Activated CD8-positive, alpha-beta T cell treated with anti-CD3 and anti-CD28 coated beads, Interleukin-2, amount 10 ng/mL, durations not matched to agents 7 days and 5 days (primary cell): ENCODE measurements at regions of chr15 and their contacts with region 1.

Region 1: DNA sequence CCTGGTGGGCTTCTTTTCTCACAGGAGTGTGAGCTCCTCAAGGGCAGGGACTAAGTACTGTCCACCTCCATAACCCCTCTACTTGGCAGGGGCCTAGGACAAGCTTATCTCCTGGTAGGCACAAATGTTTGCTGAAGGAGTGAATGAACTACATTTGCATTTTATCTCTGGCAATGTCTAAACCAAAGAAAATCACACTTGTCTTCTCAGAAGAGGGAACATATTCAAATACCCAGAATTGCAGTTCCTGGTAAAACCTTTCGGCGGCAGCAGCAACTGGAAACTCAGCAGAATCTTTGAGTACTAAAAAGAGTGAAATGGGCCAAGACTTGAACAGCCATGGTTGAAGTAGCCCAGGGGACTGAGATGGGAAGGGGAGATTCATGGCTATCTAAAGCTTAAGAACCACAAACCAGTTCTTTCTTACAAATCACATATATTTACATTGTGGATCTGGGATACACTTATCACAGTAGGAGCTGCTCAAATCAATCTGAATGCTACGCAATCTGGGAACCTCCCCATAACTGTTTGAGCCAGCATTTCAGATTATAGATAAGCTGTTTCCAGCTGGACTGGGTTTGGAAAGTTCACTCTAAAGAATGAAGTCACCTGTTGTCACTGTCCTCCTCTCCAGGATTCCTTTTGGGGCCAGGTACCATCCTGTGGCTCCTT is 18.7 kb upstream of the PTPN9 start:
- DNase-seq: peak; percentile 80
- ATAC-seq: peak; percentile 86
- H3K4me3 Mint-ChIP-seq: peak overlapping the region; percentile 63
- H3K27ac Mint-ChIP-seq: peak overlapping the region; percentile 93
- H3K4me1 Mint-ChIP-seq: peaks cover 43% of the 10 kb centered on the region
- H3K27me3 Mint-ChIP-seq: no peaks in the 10 kb centered on the region

Region 2: GRCh38 chr15:75508840-75509532 is 88.8 kb before region 1 on chr15:
- CTCF ChIA-PET with region 1: interaction called, 22 read pairs
- POLR2A ChIA-PET with region 1: no interaction called
- DNase-seq: peak; percentile 47
- ATAC-seq: peak; percentile 42
- H3K4me3 Mint-ChIP-seq: no peak overlapping the region
- H3K27ac Mint-ChIP-seq: peak overlapping the region; percentile 8
- H3K4me1 Mint-ChIP-seq: no peaks in the 10 kb centered on the region
- H3K27me3 Mint-ChIP-seq: no peaks in the 10 kb centered on the region

Region 3: DNA sequence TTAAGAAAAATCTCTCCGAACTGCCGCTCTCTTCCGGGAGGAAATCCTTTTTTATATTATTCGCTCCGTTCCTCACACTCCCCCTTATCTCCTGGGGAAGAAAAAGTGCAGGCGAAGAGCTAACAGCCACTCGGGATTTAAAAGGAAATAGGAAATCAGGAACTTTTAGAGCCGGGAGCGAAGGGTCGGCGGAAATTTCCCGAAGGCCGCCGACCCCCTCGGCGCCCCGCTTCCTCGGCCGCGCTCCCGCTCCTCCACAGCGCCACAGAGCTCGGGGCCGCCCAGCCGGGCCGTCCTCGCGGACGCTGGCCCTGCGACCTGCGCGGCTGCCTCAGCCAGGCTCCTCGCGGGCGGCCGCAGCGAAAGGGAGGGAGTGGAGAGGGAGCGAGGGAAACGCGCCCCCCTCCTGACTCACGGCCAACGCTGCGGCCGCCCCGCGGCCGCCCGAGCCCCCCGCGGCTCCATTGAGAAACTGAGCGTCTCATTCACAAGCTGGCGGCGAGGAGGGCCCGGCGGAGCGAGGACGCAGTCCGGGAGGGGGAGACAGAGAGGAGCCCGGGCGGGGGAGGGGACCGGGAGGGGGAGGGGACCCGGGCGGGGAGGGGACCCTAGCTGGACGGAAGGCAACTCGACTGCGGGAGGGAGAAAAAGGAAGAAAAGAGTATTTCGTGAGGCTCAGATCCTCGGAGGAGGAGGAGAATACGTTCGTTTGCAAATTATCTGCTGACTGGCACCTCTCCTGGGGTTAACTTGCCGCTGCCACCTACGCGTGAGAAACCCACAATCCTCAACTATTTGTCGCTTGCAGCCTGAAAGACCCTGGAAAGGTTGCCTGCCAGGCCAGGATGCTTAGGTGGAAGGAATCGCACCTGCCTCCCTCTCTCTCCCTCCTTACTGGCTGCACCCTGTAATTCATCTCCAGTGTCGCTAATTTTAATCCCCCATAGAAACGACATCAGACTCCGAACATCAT is 18.6 kb before region 1 on chr15 and contains the start of gene PTPN9:
- CTCF ChIA-PET with region 1: interaction called, 24 read pairs
- POLR2A ChIA-PET with region 1: interaction called, 3 read pairs
- DNase-seq: peak; percentile 84
- ATAC-seq: peak; percentile 83
- H3K4me3 Mint-ChIP-seq: peak within 1 kb of the TSS; percentile 92
- H3K27ac Mint-ChIP-seq: peak within 1 kb of the TSS; percentile 94
- H3K4me1 Mint-ChIP-seq: peaks cover 18% of the 10 kb centered on the region
- H3K27me3 Mint-ChIP-seq: no peaks in the 10 kb centered on the region
- total RNA-seq, gene PTPN9: 46.3 to 48.7 TPM

Region 4: GRCh38 chr15:75625542-75626347 is 27.9 kb after region 1 on chr15 and contains the start of gene SNUPN:
- CTCF ChIA-PET with region 1: interaction called, 21 read pairs
- POLR2A ChIA-PET with region 1: interaction called, 19 read pairs
- DNase-seq: peak; percentile 97
- ATAC-seq: peak; percentile 89
- H3K4me3 Mint-ChIP-seq: peak within 1 kb of the TSS; percentile 97
- H3K27ac Mint-ChIP-seq: peak within 1 kb of the TSS; percentile 99
- H3K4me1 Mint-ChIP-seq: peaks cover 44% of the 10 kb centered on the region
- H3K27me3 Mint-ChIP-seq: no peaks in the 10 kb centered on the region
- total RNA-seq, gene SNUPN: 31.4 to 32.5 TPM

Region 5: DNA sequence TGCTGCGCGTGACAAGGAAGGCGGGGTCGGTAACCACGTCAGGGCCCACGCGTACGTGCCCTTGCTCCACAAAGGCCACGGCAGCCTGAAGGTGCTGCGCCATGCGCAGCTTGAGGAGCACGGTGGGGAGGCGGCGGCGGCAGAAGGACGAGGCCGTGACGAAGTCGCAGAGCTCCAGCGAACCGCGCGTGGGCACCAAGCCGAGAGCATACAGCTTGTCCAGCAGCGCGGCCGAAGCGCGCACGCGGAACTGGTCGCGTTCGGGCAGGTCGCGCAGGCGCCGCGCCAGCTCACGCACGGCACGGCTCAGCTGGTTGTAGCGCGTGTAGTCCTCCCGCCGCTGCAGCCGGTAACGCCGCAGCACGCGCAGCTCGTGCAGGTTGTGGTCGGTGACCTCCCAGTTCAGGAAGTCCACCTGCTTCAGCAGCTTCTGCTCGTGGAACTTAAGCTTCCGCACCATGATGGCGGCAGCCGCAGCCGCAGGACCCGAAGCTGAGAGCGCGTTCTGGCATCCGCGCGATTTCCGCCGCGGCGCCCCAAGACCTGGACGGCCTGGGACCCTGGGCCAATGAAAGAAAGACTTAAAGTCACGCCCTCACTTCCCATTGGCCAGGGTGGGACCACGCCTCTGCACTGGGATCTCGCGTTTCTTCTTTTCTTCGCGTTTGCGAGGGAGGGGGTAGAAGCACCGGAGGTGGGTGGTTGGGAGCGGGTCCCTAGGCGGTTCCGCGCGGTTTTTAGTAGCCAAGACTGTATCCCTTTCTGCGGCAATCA is 42.1 kb after region 1 on chr15 and contains the start of gene IMP3:
- CTCF ChIA-PET with region 1: interaction called, 63 read pairs
- POLR2A ChIA-PET with region 1: interaction called, 25 read pairs
- DNase-seq: peak; percentile 98
- ATAC-seq: peak; percentile 95
- H3K4me3 Mint-ChIP-seq: peak within 1 kb of the TSS; percentile 88
- H3K27ac Mint-ChIP-seq: peak within 1 kb of the TSS; percentile 95
- H3K4me1 Mint-ChIP-seq: peaks cover 34% of the 10 kb centered on the region
- H3K27me3 Mint-ChIP-seq: no peaks in the 10 kb centered on the region
- total RNA-seq, gene IMP3: 97.9 to 99.1 TPM

Region 6: DNA sequence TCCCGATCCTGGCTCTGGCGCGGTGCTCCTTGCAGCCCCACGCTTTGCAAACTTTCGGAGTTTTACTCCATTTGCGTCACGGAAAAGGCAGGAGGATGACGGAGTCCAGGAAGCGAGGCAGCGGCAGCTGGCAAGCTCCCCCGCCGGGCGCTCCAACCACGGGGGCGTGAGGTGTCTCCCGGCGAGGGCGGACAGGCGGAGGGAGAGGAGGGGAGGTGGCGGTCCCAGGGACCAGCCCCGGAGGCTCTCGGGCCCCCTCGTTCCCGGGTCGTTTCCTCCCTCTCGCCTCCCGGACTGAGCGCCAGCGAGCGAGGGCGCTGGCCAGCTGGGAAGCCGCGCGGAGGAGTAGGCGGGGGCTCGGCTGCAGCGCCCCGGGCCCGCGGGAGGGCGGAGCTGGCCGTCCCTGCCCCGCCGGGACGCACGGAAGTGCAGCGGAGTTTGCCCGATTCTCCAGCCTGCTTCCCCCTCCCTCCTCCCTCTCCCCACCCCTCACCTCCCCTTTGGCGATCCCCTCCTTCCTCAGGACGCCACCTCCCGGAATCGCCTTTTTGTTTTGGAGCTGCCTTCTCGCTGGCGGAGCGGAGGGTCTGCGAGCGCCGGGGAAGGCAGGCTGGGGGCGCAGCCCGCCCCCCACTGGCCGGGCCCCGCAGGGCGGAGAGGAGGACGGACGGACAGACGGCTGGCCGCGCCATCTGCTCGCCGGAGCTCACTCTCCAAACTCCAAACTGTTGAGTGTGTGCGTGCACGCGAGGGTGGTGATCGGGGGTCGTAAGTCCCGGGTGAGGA is 49.8 kb after region 1 on chr15 and contains the start of gene SNX33:
- CTCF ChIA-PET with region 1: interaction called, 63 read pairs
- POLR2A ChIA-PET with region 1: no interaction called
- DNase-seq: peak; percentile 63
- ATAC-seq: peak; percentile 77
- H3K4me3 Mint-ChIP-seq: peak within 1 kb of the TSS; percentile 78
- H3K27ac Mint-ChIP-seq: peak within 1 kb of the TSS; percentile 68
- H3K4me1 Mint-ChIP-seq: peaks cover 29% of the 10 kb centered on the region
- H3K27me3 Mint-ChIP-seq: peaks cover 17% of the 10 kb centered on the region
- total RNA-seq, gene SNX33: 0.55 to 0.70 TPM

Region 7: DNA sequence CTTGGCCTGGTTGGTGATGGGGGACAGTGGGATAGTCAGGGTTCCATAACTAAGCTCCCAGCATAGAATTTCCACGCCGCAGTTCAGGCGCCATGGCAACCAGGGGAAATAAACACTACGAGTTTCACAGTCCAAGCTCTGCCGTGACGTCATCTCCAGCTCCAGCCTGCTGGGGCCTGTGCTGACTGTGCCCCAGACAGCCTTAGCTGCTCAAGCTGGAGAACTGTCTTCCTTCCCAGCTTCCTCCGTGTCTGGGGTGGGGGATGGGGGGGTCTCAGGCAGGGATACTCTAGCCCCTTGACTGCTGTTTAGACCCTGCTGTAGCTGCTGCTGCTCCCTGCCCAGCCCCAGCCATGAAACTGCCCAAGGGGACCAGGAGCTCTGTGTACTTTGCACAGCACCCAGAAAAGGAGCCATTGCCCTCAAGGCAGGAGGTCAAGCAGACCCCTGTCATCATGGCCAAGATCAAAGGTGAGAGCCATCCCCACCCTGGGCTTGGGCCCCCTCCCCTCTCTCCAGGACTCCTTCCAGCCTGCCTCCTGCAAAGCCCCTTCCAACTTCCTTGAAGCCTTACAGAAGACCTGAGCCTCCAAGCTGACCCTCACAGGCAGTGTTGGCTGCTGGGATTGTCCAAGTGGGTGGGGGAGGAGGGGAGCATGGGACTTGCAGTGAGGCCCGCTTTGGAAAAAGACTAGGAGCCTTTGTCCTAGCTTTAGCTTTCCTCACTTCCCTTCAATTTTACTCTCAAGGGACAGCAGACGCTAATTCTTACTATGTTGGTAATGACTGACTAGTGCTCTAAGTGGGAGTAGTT is 126.2 kb after region 1 on chr15:
- CTCF ChIA-PET with region 1: no interaction called
- POLR2A ChIA-PET with region 1: interaction called, 11 read pairs
- DNase-seq: peak; percentile 53
- ATAC-seq: peak; percentile 73
- H3K4me3 Mint-ChIP-seq: no peak overlapping the region
- H3K27ac Mint-ChIP-seq: no peak overlapping the region
- H3K4me1 Mint-ChIP-seq: peaks cover 3% of the 10 kb centered on the region
- H3K27me3 Mint-ChIP-seq: peaks cover 5% of the 10 kb centered on the region